RWPE1 (cell line): ENCODE measurements at regions of chr2 and their contacts with region 1.

Region 1: DNA sequence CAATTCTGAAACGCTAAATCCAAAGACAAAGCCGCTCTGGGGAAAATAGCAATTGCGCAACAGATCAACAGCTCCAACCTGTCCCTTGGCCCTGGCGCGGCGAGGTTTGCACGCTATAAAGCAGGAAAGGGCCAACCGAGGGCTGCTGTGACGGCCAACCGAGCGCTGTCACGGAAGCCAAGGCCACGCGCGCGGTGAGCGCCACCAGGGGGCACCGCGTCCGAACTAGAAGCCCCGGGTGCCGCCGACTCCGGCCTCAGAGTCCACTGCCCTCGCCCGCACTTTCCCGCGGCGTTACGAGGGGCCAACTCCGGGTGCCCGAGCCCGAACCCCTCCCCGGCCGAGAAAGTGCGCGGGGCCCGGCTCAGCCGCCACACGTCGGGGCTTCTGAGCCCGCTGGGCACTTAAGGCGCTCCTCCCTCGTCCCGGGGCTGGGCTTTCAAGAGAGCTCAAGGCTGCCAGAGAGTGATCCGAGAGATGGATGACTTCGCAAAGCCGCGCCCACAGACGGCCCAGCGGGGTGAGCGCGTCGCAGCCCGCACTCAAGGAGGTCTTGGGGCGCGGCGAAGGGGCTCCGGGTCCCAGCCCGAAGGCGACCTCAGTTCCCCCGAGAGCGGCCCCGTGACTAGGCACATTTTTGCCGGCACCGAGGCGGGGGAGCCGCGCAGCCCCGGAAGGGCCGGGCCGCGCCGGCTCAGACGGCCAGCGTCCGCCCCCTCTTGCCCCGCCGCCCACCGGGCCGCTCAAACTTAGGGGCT is 897 bp downstream of the NFE2L2 start:
- DNase-seq: peak; percentile 86
- H3K27ac ChIP-seq: peak overlapping the region; percentile 100
- CTCF ChIP-seq: peak; percentile 86

Region 2: GRCh38 chr2:177572236-177572671 is 308.6 kb after region 1 on chr2:
- CTCF ChIA-PET with region 1: no interaction called
- POLR2A ChIA-PET with region 1: no interaction called
- DNase-seq: no peak
- H3K27ac ChIP-seq: no peak overlapping the region
- CTCF ChIP-seq: no peak

Region 3: GRCh38 chr2:177724398-177725287 is 461.0 kb after region 1 on chr2:
- CTCF ChIA-PET with region 1: interaction called, 16 read pairs
- POLR2A ChIA-PET with region 1: interaction called, 3 read pairs
- DNase-seq: peak; percentile 64
- H3K27ac ChIP-seq: no peak overlapping the region
- CTCF ChIP-seq: peak; percentile 81